GM12878 (cell line): ENCODE measurements at regions of chr2 and their contacts with region 1.

Region 1: DNA sequence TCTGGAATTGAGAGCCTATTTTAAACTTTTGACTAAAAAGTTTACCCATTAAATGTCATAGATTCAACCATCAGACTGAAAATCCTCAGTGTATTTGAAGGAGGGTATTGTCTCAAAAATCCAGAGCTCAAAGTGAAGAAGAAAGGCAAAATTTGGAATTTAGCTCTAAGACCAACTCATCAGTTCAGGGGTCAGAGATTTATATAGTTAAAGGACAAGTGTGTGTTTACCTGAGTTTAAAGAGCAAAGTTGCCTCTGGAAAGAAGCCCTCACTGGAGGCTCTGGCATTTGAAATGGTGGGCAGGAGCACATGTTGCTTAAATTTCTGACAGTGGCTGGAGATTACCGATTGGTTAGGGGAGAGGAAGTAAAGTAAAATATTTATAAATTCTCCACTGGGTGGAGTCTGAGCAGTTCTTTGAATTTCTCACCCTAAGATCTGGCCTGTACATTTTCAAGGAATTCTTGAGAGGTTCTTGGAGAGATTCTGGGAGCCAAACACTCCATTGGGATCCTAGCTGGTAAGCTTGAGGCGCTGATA is at the start of gene KYNU:
- DNase-seq: no peak
- ATAC-seq: peak; percentile 68
- H3K4me3 ChIP-seq: peak within 1 kb of the TSS; percentile 80
- H3K27ac ChIP-seq: peak within 1 kb of the TSS; percentile 83
- H3K4me1 ChIP-seq: peaks cover 22% of the 10 kb centered on the region
- H3K27me3 ChIP-seq: no peaks in the 10 kb centered on the region
- CTCF ChIP-seq: peak; percentile 9 to 30 (median 22); a peak in 2 of 6 replicates
- EP300 ChIP-seq: no peak
- POLR2A ChIP-seq: no peak
- RAD21 ChIP-seq: peak; percentile 32; the same call in 1 of the 2 replicates
- polyA plus RNA-seq, gene KYNU: 65.0 to 101 TPM

Region 2: DNA sequence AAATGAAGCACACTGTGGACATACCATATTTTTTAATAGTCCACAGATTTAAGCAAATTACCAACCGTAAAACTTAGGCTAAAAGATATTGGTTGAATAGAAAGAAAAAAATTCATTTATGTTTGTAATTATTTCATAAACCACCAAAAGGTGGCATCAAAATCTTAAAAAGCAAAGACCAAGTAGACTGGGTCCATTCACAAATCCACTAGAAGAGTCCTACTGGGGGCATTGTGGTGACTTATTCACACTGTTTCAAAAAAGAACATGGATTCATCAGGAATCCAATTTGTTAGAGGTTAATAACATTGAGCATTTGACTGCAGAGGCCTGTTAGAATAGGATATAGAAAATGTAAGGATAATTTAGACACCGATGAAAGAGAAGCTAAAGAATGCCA is 194.8 kb before region 1 on chr2:
- CTCF ChIA-PET with region 1: interaction called, 6 read pairs
- POLR2A ChIA-PET with region 1: no interaction called
- RAD21 ChIA-PET with region 1: interaction called, 4 read pairs
- SMC1A ChIA-PET with region 1: interaction called, 7 read pairs
- in situ Hi-C with region 1: no loop called
- intact Hi-C with region 1: loop called (anchors 2 kb)
- DNase-seq: no peak
- ATAC-seq: peak; percentile 39; the same call in 2 of the 3 replicates
- H3K4me3 ChIP-seq: no peak overlapping the region
- H3K27ac ChIP-seq: no peak overlapping the region
- H3K4me1 ChIP-seq: no peaks in the 10 kb centered on the region
- H3K27me3 ChIP-seq: peaks cover 0 to 4% of the 10 kb centered on the region in 2 experiments; a peak in 1 of 4 replicates
- CTCF ChIP-seq: peak in 1 of 3 experiments; percentile 36; a peak in 1 of 6 replicates
- EP300 ChIP-seq: no peak
- POLR2A ChIP-seq: no peak
- RAD21 ChIP-seq: peak; percentile 79

Region 3: DNA sequence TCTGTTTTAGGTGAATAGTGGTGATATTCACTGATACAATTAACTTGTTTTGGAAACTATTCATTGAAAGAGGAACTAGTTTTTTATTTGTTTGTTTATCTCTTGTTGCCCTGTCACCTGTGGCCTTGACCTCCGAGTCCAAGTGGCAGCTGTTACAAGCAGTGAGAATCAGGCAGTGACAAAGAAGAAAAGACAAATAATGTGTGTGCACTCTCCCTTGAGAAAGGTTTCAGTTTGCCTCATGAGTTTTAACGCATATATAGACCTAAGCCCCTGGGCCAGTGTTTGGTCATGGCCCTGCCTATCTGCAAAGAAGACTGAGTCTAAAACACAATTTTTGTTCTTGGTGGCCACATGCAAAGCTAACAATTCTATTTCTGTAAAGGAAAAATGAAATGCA is 15.4 kb after region 1 on chr2:
- CTCF ChIA-PET with region 1: interaction called, 17 read pairs
- POLR2A ChIA-PET with region 1: interaction called, 17 read pairs
- RAD21 ChIA-PET with region 1: interaction called, 23 read pairs
- SMC1A ChIA-PET with region 1: interaction called, 56 read pairs
- in situ Hi-C with region 1: no loop called
- intact Hi-C with region 1: no loop called
- DNase-seq: peak; percentile 79
- ATAC-seq: peak; percentile 98
- H3K4me3 ChIP-seq: no peak overlapping the region
- H3K27ac ChIP-seq: peak overlapping the region; percentile 48; the same call in 1 of the 2 replicates
- H3K4me1 ChIP-seq: peaks cover 14% of the 10 kb centered on the region; the same call in 1 of the 2 replicates
- H3K27me3 ChIP-seq: no peaks in the 10 kb centered on the region
- CTCF ChIP-seq: no peak
- EP300 ChIP-seq: peak; percentile 55 to 92; a peak in 3 of 4 replicates
- POLR2A ChIP-seq: no peak
- RAD21 ChIP-seq: no peak

Region 4: GRCh38 chr2:142914507-142915313 is 37.4 kb after region 1 on chr2:
- CTCF ChIA-PET with region 1: interaction called, 28 read pairs
- POLR2A ChIA-PET with region 1: interaction called, 18 read pairs
- RAD21 ChIA-PET with region 1: interaction called, 38 read pairs
- SMC1A ChIA-PET with region 1: interaction called, 71 read pairs
- in situ Hi-C with region 1: no loop called
- intact Hi-C with region 1: loop called (anchors 2 kb)
- DNase-seq: peak; percentile 75
- ATAC-seq: peak; percentile 100
- H3K4me3 ChIP-seq: peak overlapping the region; percentile 37
- H3K27ac ChIP-seq: peak overlapping the region; percentile 85
- H3K4me1 ChIP-seq: peaks cover 13% of the 10 kb centered on the region; the same call in 1 of the 2 replicates
- H3K27me3 ChIP-seq: no peaks in the 10 kb centered on the region
- CTCF ChIP-seq: no peak
- EP300 ChIP-seq: no peak
- POLR2A ChIP-seq: peak; percentile 33; the same call in 1 of the 2 replicates
- RAD21 ChIP-seq: no peak

Region 5: GRCh38 chr2:142926445-142926844 is 49.2 kb after region 1 on chr2:
- CTCF ChIA-PET with region 1: no interaction called
- POLR2A ChIA-PET with region 1: no interaction called
- RAD21 ChIA-PET with region 1: no interaction called
- SMC1A ChIA-PET with region 1: no interaction called
- in situ Hi-C with region 1: no loop called
- intact Hi-C with region 1: no loop called
- DNase-seq: no peak
- ATAC-seq: no peak
- H3K4me3 ChIP-seq: no peak overlapping the region
- H3K27ac ChIP-seq: no peak overlapping the region
- H3K4me1 ChIP-seq: no peaks in the 10 kb centered on the region
- H3K27me3 ChIP-seq: no peaks in the 10 kb centered on the region
- CTCF ChIP-seq: no peak
- EP300 ChIP-seq: no peak
- POLR2A ChIP-seq: no peak
- RAD21 ChIP-seq: no peak

Region 6: DNA sequence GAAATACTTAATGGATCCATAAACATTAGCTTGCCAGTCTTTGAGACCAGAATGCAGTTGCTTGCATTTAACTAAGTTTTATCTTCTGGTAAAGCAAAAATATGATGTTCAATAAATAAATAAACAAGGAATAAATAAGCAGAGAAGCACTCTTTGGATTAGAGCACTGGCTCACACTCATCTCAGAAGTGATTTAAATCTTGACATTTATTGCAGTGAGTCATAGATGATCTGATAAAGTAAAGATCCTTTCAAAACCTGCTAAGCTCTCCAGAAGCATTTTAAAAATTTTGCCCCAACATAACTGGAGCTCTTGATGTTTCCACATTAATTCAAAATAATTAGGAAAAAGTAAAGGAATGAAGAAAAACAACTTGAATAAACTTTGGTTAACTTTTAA is 67.0 kb after region 1 on chr2:
- CTCF ChIA-PET with region 1: interaction called, 8 read pairs
- POLR2A ChIA-PET with region 1: interaction called, 5 read pairs
- RAD21 ChIA-PET with region 1: interaction called, 11 read pairs
- SMC1A ChIA-PET with region 1: interaction called, 11 read pairs
- in situ Hi-C with region 1: no loop called
- intact Hi-C with region 1: no loop called
- DNase-seq: no peak
- ATAC-seq: no peak
- H3K4me3 ChIP-seq: no peak overlapping the region
- H3K27ac ChIP-seq: no peak overlapping the region
- H3K4me1 ChIP-seq: no peaks in the 10 kb centered on the region
- H3K27me3 ChIP-seq: no peaks in the 10 kb centered on the region
- CTCF ChIP-seq: no peak
- EP300 ChIP-seq: no peak
- POLR2A ChIP-seq: no peak
- RAD21 ChIP-seq: no peak

Region 7: GRCh38 chr2:142980561-142981378 is 103.5 kb after region 1 on chr2:
- CTCF ChIA-PET with region 1: interaction called, 48 read pairs
- POLR2A ChIA-PET with region 1: interaction called, 5 read pairs
- RAD21 ChIA-PET with region 1: interaction called, 33 read pairs
- SMC1A ChIA-PET with region 1: interaction called, 64 read pairs
- in situ Hi-C with region 1: no loop called
- intact Hi-C with region 1: loop called (anchors 2 kb)
- DNase-seq: no peak
- ATAC-seq: peak; percentile 58
- H3K4me3 ChIP-seq: no peak overlapping the region
- H3K27ac ChIP-seq: no peak overlapping the region
- H3K4me1 ChIP-seq: peaks cover 19% of the 10 kb centered on the region
- H3K27me3 ChIP-seq: no peaks in the 10 kb centered on the region
- CTCF ChIP-seq: peak; percentile 42 to 66 (median 43); a peak in 5 of 6 replicates
- EP300 ChIP-seq: no peak
- POLR2A ChIP-seq: no peak
- RAD21 ChIP-seq: peak; percentile 68

Region 8: DNA sequence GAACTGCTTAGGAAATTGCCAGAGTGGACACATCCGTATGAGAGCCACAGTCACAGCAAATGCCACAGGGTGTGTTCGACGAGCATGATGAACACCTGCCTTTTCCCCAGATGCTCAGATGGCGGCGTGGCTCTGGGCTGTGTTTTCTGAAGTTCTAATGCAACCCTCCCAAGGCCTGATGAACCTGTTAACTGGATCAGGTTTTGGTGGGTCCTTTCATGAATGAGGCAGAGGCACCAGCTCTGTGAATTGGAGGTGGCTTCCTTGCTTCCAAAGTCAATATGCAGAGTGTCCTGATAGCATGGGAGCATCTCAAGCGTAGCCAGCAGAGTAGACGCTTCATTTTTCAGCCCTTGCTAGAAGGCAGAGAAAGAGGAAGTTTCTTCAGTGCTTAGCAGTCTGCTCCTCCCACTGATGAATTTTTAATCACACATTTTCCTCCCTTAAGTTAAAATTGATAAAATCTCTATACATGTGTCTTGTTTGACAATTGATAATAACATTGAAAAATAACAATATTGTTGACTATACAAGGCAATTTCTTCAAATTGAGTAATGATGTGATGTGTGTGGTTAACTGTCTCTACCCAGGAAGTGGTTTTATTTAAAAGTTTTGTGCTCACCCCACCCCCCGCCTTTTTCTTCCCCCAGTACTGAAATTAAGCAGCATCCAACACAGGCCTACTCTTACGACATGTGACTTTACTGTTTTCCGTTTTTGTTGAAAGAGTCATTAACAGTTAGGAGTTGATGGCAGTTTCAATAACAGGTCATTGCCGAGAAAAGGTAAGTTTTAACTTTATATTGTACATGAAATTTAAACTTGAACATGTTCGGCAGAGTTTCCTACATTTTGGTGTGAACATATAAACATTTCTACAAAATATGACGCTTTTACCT is 251.6 kb after region 1 on chr2 and contains the start of gene ARHGAP15:
- CTCF ChIA-PET with region 1: no interaction called
- POLR2A ChIA-PET with region 1: no interaction called
- RAD21 ChIA-PET with region 1: no interaction called
- SMC1A ChIA-PET with region 1: no interaction called
- in situ Hi-C with region 1: no loop called
- intact Hi-C with region 1: loop called (anchors 5 kb)
- DNase-seq: peak; percentile 85
- ATAC-seq: peak; percentile 86
- H3K4me3 ChIP-seq: peak within 1 kb of the TSS; percentile 74
- H3K27ac ChIP-seq: peak within 1 kb of the TSS; percentile 88
- H3K4me1 ChIP-seq: peaks cover 10% of the 10 kb centered on the region
- H3K27me3 ChIP-seq: no peaks in the 10 kb centered on the region
- CTCF ChIP-seq: no peak
- EP300 ChIP-seq: peak; percentile 44 to 71; a peak in 3 of 4 replicates
- POLR2A ChIP-seq: peak; percentile 85
- RAD21 ChIP-seq: no peak
- polyA plus RNA-seq, gene ARHGAP15: 66.6 to 69.9 TPM